ENCODE measurements at regions of chr5 and their contacts with region 1.

Region 1: GRCh38 chr5:65142511-65143011 is 339.2 kb downstream of the ADAMTS6 start:
- DNase-seq: no peak
- H3K4me3 ChIP-seq: no peak overlapping the region; the same call in 1 of the 2 replicates
- H3K27ac ChIP-seq: peak overlapping the region; percentile 86
- H3K27me3 ChIP-seq: no peaks in the 10 kb centered on the region
- CTCF ChIP-seq: no peak

Region 2: GRCh38 chr5:65125591-65126541 is 16.7 kb before region 1 on chr5:
- CTCF ChIA-PET with region 1: interaction called, 3 read pairs
- POLR2A ChIA-PET with region 1: interaction called, 12 read pairs
- DNase-seq: no peak
- H3K4me3 ChIP-seq: no peak overlapping the region
- H3K27ac ChIP-seq: peak overlapping the region; percentile 99
- H3K27me3 ChIP-seq: no peaks in the 10 kb centered on the region
- CTCF ChIP-seq: no peak

Region 3: GRCh38 chr5:65213921-65214525 is 71.5 kb after region 1 on chr5:
- CTCF ChIA-PET with region 1: interaction called, 12 read pairs
- POLR2A ChIA-PET with region 1: no interaction called
- DNase-seq: no peak
- H3K4me3 ChIP-seq: no peak overlapping the region
- H3K27ac ChIP-seq: no peak overlapping the region
- H3K27me3 ChIP-seq: no peaks in the 10 kb centered on the region
- CTCF ChIP-seq: peak; percentile 56

Region 4: DNA sequence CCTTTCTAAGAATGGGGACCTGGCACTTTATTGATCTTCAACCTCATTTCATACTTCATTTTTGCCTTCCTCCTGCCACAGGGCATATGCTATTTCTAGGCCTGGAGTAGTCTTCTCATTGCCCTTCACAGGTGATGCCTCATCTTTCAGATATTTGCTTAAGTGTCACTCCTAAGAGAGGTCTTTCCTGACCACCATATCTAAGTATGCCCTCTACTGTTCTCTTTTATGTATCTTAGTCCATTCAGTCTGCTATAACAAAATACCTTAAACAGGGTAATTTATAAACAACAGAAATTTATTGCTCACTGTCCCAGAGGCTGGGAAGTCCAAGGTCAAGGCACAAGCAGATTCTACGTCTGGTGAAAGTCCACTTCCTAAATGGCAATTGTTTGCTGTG is 240.0 kb after region 1 on chr5:
- CTCF ChIA-PET with region 1: no interaction called
- POLR2A ChIA-PET with region 1: no interaction called
- DNase-seq: no peak
- H3K4me3 ChIP-seq: no peak overlapping the region
- H3K27ac ChIP-seq: no peak overlapping the region
- H3K27me3 ChIP-seq: no peaks in the 10 kb centered on the region
- CTCF ChIP-seq: no peak

Region 5: DNA sequence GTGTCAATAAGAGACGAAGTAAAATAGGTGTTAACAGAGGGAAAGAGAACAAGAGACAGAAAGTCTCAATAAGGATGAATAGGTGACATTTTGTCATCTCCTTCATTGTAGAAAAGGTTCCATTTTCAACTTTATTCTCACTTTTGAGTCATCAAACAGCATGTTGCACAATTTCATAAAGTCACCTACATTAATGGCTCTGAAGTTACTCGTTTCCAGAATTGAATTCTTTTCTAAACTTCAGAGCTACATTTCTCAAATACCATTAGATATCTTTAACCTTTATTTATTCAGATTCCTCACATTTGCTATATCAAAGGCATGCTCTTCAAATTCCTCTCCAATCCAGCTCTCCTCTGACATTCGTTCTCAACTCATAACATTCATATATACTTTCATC is 326.1 kb after region 1 on chr5:
- CTCF ChIA-PET with region 1: no interaction called
- POLR2A ChIA-PET with region 1: no interaction called
- DNase-seq: no peak
- H3K4me3 ChIP-seq: no peak overlapping the region
- H3K27ac ChIP-seq: no peak overlapping the region
- H3K27me3 ChIP-seq: no peaks in the 10 kb centered on the region
- CTCF ChIP-seq: no peak